Activated B cell treated with CpG ODN at 0.5 μM for 24 hours (primary cell): ENCODE measurements at regions of chr17 and their contacts with region 1.

Region 1: DNA sequence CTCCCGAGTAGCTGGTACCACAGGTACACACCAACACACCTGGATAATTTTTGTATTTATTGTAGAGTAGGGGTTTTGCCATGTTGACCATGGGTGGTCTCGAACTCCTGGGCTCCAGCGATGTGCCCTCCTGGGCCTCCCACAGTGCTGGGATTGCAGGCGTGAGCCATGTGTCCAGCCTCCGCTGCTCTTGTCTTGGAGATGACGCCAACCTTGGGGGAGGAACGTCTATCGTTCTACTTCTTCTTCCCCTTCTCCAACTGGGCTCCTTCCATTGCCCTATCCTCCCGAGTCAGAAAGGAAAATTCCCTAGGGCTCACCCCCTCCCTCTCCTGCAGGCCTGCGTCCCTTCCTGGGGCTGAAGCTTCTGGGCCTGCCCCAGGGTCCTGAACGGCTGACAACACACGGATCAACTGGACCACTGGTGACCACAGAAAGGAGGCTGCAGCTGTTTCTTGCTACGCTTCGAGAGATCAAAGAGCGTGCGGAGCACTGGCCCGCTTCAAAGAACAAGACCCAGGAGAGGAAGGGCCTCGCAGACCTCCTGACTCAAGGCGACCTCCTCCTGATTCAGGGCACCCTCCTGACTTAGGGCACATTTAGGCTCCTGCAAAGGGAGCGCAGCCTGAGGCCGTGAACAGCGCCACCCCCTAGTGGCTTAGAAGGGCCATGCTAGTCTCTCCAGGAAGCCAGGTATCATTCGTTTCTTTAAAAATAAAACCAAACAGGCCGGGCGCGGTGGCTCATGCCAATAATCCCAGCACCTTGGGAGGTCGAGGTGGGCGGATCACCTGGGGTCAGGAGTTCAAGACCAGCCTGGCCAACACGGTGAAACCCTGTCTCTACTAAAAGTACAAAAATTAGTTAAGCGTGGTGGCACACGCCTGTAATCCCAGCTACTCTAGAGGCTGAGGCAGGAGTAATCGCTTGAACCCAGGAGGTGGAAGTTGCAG is 48.5 kb upstream of the HELZ start:
- DNase-seq: peak; percentile 31
- ATAC-seq: peak; percentile 88
- H3K4me3 Mint-ChIP-seq: peak overlapping the region; percentile 28
- H3K27ac Mint-ChIP-seq: no peak overlapping the region
- H3K4me1 Mint-ChIP-seq: peaks cover 5% of the 10 kb centered on the region
- H3K27me3 Mint-ChIP-seq: no peaks in the 10 kb centered on the region
- CTCF ChIP-seq: no peak

Region 2: DNA sequence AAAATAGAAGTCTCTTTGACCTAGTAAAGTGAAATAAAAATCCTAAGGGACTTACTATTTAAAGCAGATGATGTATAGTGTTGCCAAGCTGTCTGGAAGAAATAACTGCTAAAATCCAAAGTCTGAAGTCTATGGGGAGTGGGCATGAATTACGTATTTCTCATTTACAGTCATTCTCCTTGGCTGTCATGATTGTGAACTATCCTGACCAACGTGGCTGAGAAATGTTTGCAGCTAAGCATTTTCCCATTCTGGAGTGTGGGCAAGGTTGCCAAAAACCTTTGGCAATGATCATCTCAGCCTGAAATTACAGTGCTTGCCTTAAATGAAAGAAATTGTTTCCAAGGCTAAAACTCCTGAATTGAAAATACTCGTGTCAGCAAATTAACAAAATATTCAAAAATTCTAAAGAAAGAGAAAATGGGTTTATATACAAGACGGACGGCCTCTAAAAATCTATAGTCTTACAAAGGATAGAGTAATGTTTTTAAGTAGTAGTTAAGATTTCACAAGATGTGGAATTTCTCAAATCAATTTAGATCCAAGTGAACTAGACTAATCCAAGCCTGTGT is 172.1 kb before region 1 on chr17:
- CTCF ChIA-PET with region 1: no interaction called
- POLR2A ChIA-PET with region 1: no interaction called
- intact Hi-C with region 1: no loop called
- DNase-seq: no peak
- ATAC-seq: no peak
- H3K4me3 Mint-ChIP-seq: no peak overlapping the region
- H3K27ac Mint-ChIP-seq: no peak overlapping the region
- H3K4me1 Mint-ChIP-seq: no peaks in the 10 kb centered on the region
- H3K27me3 Mint-ChIP-seq: no peaks in the 10 kb centered on the region
- CTCF ChIP-seq: no peak

Region 3: DNA sequence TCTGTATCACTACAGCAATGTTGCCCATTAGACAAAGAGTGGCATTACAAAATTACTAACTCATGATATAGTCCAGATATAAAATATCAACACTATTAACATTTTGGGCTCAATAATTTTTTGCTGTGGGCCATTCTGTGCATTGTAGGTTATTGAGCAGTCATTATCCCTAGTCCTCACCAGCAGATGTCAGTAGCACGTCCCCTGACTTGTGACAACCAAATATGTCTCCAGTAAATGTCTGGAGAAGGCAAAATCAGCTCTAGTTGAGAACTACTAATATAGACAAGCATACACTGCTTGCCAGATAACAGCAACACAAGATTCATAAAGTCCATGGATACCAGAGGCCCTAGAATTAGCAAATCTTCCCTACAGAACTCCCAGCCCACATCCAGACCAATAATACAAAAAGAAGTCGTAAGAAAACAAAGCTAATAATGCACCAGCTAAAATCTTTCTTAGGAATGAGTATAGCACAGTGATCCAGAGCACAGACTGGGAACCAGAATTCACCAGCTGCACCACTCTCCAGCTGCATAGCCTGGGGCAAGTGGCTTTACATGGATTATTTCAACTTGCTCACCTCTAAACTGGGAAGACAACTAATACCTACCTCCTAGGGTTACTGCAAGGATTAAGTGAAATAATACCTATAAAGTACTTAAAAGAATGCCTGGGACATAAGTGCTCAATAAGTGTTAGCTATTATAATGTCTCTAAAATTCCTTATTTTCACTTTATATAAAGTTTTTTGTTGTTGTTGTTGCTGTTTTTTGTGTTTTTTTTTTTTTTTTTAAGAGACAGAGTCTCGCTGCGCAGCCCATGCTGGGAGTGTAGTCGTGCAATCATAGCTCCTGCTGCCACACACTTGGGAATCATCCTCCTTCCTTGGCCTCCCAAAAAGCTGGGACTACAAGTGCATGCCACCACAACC is 72.2 kb before region 1 on chr17:
- CTCF ChIA-PET with region 1: no interaction called
- POLR2A ChIA-PET with region 1: no interaction called
- intact Hi-C with region 1: loop called (anchors 1 kb)
- DNase-seq: no peak
- ATAC-seq: no peak
- H3K4me3 Mint-ChIP-seq: no peak overlapping the region
- H3K27ac Mint-ChIP-seq: no peak overlapping the region
- H3K4me1 Mint-ChIP-seq: peaks cover 6% of the 10 kb centered on the region
- H3K27me3 Mint-ChIP-seq: no peaks in the 10 kb centered on the region
- CTCF ChIP-seq: no peak